Ascending aorta (tissue), 2 donors: ENCODE measurements at regions of chr14 and their contacts with region 1.

Region 1: GRCh38 chr14:75307700-75308379 is 29.2 kb downstream of the FOS start:
- DNase-seq: peak in 1 of 2 donors; percentile 91
- H3K4me3 ChIP-seq: no peak overlapping the region
- H3K27ac ChIP-seq: no peak overlapping the region
- H3K4me1 ChIP-seq: peaks cover 0 to 13% of the 10 kb centered on the region in 2 donors
- H3K27me3 ChIP-seq: no peaks in the 10 kb centered on the region
- CTCF ChIP-seq: peak; percentile 74 to 94 (median 86)

Region 2: GRCh38 chr14:75132382-75133086 is 175.3 kb before region 1 on chr14:
- intact Hi-C with region 1: loop called (anchors 1 kb)
- DNase-seq: no peak
- H3K4me3 ChIP-seq: no peak overlapping the region
- H3K27ac ChIP-seq: peak overlapping the region; percentile 4 to 41
- H3K4me1 ChIP-seq: peaks cover 4 to 8% of the 10 kb centered on the region in 2 donors
- H3K27me3 ChIP-seq: no peaks in the 10 kb centered on the region
- CTCF ChIP-seq: peak; percentile 68 to 73 (median 71)

Region 3: GRCh38 chr14:75274899-75275569 is 32.8 kb before region 1 on chr14:
- intact Hi-C with region 1: no loop called
- DNase-seq: peak; percentile 70 to 86
- H3K4me3 ChIP-seq: no peak overlapping the region
- H3K27ac ChIP-seq: peak overlapping the region; percentile 95 to 100
- H3K4me1 ChIP-seq: peaks cover 6 to 17% of the 10 kb centered on the region in 2 donors
- H3K27me3 ChIP-seq: no peaks in the 10 kb centered on the region
- CTCF ChIP-seq: no peak

Region 4: GRCh38 chr14:75399821-75400678 is 92.2 kb after region 1 on chr14:
- intact Hi-C with region 1: loop called (anchors 1 kb)
- DNase-seq: peak; percentile 93 to 99
- H3K4me3 ChIP-seq: peak overlapping the region in 1 of 2 donors; percentile 27
- H3K27ac ChIP-seq: peak overlapping the region; percentile 43 to 66
- H3K4me1 ChIP-seq: peaks cover 9 to 17% of the 10 kb centered on the region in 2 donors
- H3K27me3 ChIP-seq: no peaks in the 10 kb centered on the region
- CTCF ChIP-seq: no peak

Region 5: DNA sequence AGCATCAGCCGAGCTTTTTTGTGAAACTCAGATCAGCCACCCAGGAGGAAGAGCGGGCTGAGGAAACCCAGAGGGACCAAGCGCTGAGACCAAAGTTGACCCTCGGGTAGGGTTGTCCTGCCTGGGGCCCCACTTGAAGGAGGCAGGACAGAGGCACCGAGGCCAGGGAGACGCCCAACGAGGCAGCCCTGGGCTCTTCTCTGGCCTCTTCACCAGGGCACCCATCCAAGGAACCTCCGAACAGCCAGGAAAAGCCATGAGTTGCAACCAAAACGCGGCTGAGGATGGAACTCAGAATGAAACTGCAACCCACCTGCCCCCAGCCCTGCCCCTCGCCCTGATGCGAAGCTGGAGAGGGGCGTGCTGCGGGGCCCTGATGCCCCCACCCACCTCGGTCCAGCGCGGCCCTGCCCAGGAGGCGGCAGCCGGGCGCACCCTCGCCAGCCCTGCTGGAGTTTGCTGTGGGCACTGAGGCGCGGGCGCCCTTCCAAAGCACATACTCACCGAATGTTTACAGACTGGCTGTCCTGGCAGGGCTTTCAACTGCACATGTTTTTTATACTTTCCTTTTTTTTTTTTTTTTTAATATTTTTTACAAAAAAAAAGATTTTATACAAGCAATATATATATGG is 161.9 kb after region 1 on chr14:
- intact Hi-C with region 1: loop called (anchors 5 kb)
- DNase-seq: peak in 1 of 2 donors; percentile 86
- H3K4me3 ChIP-seq: peak overlapping the region in 1 of 2 donors; percentile 26
- H3K27ac ChIP-seq: peak overlapping the region; percentile 46 to 64
- H3K4me1 ChIP-seq: peaks cover 5 to 26% of the 10 kb centered on the region in 2 donors
- H3K27me3 ChIP-seq: no peaks in the 10 kb centered on the region
- CTCF ChIP-seq: peak in 1 of 3 experiments; percentile 25

Region 6: GRCh38 chr14:75654127-75654732 is 346.4 kb after region 1 on chr14:
- intact Hi-C with region 1: loop called (anchors 10 kb)
- DNase-seq: peak; percentile 22 to 88
- H3K4me3 ChIP-seq: no peak overlapping the region
- H3K27ac ChIP-seq: no peak overlapping the region
- H3K4me1 ChIP-seq: no peaks in the 10 kb centered on the region
- H3K27me3 ChIP-seq: no peaks in the 10 kb centered on the region
- CTCF ChIP-seq: peak; percentile 79 to 95 (median 93)